ENCODE measurements at regions of chr2 and their contacts with region 1.

Region 1: DNA sequence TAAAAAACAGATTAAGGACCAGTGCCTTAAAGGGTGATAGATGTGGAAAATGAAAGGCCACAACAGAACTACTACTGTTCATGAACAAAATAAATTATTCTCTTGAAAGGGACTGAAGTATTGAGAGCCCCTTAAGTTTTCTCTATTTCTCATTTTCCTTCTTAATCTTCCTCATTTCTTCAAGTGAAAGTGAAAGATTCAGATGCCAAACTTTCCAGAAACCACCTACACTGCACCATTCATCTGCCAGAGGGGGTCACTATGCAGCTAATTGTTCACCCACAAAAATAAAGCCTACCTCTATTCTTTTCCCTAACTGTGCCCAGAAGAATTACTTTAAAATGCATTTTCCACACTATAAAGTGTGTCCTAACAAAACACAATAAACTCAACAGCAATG is 140.1 kb downstream of the NR4A2 start:
- DNase-seq: no peak
- H3K4me3 ChIP-seq: no peak overlapping the region
- H3K27ac ChIP-seq: no peak overlapping the region
- H3K4me1 ChIP-seq: no peaks in the 10 kb centered on the region
- H3K27me3 ChIP-seq: no peaks in the 10 kb centered on the region
- CTCF ChIP-seq: peak in 2 of 3 experiments; percentile 12 to 19

Region 2: DNA sequence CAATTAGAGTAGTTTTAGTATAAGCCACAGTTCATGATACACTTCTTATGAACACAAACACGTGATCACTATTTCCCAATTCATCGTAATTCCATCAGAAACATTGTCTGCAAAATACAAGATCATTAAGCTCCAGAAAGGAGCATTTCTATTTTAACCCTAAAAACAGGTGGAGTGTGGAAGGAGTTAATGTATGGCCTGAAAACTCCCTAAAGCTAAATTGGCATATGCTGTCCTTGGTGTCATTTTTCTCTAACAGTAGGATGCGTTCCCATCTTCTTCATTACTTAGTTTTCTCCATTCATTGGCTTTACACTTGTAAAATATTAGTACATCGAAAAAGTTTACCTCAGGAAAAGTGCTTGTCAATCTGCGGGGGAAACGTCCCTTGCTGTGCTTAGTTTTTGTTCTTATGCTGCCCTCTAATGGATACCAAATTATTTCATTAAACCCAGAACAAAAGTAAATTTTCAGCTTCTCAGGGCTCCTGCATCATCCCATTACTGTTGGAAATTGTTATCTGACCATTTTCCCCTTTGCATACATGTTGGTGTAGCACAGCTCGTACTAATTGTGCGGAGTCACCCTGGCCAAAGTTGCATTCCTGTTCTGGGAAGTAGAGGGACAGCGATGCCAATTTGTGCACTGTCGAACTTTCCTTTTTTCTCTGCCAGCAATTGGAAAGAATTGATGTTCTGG is 397.1 kb after region 1 on chr2:
- intact Hi-C with region 1: loop called (anchors 5 kb)
- DNase-seq: no peak
- H3K4me3 ChIP-seq: no peak overlapping the region
- H3K27ac ChIP-seq: no peak overlapping the region
- H3K4me1 ChIP-seq: no peaks in the 10 kb centered on the region
- H3K27me3 ChIP-seq: no peaks in the 10 kb centered on the region
- CTCF ChIP-seq: peak; percentile 21 to 66 (median 36)

Measured in ascending aorta (tissue), 2 donors.